ENCODE measurements at regions of chr1 and their contacts with region 1.

Region 1: GRCh38 chr1:32773018-32773763 is 44.0 kb downstream of the YARS1 start:
- DNase-seq: peak; percentile 81 to 90 (median 86)
- ATAC-seq: peak; percentile 86
- H3K4me3 ChIP-seq: no peak overlapping the region
- H3K27ac ChIP-seq: no peak overlapping the region
- H3K4me1 ChIP-seq: peaks cover 6 to 36% of the 10 kb centered on the region in 2 experiments; a peak in 3 of 5 replicates
- H3K27me3 ChIP-seq: no peaks in the 10 kb centered on the region
- CTCF ChIP-seq: peak; percentile 98 to 99 (median 98)
- EP300 ChIP-seq: peak; percentile 43; the same call in 1 of the 2 replicates
- POLR2A ChIP-seq: no peak
- RAD21 ChIP-seq: peak; percentile 96 to 99

Region 2: DNA sequence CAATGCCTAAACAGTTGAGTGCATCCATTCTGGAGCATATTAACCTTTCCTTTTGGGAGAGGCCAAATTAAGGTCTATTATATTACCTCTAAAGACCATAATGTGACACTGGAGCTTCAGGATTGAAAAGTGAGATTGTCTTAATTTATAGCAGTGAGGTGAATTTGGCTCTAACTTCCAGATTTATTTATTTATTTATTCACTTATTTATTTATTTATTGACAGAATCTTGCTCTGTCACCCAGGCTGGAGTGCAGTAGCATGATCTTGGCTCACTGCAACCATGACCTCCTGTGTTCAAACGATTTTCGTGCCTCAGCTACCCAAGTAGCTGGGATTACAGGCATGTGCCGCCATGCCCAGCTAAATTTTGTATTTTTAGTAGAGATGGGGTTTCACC is 1457.3 kb before region 1 on chr1:
- CTCF ChIA-PET with region 1: no interaction called
- POLR2A ChIA-PET with region 1: no interaction called
- in situ Hi-C with region 1: no loop called
- intact Hi-C with region 1: no loop called
- DNase-seq: no peak
- ATAC-seq: no peak
- H3K4me3 ChIP-seq: no peak overlapping the region
- H3K27ac ChIP-seq: no peak overlapping the region
- H3K4me1 ChIP-seq: no peaks in the 10 kb centered on the region
- H3K27me3 ChIP-seq: no peaks in the 10 kb centered on the region
- CTCF ChIP-seq: no peak
- EP300 ChIP-seq: no peak
- POLR2A ChIP-seq: no peak
- RAD21 ChIP-seq: no peak

Region 3: GRCh38 chr1:32521165-32521564 is 252.0 kb before region 1 on chr1:
- CTCF ChIA-PET with region 1: interaction called, 6 read pairs
- POLR2A ChIA-PET with region 1: interaction called, 16 read pairs
- in situ Hi-C with region 1: no loop called
- intact Hi-C with region 1: loop called (anchors 5 kb)
- DNase-seq: peak in 1 of 4 experiments; percentile 30
- ATAC-seq: peak; percentile 62
- H3K4me3 ChIP-seq: no peak overlapping the region
- H3K27ac ChIP-seq: no peak overlapping the region
- H3K4me1 ChIP-seq: no peaks in the 10 kb centered on the region
- H3K27me3 ChIP-seq: peaks cover 4 to 10% of the 10 kb centered on the region in 2 experiments; a peak in 4 of 5 replicates
- CTCF ChIP-seq: peak in 2 of 3 experiments; percentile 27 to 40; a peak in 3 of 6 replicates
- EP300 ChIP-seq: no peak
- POLR2A ChIP-seq: no peak
- RAD21 ChIP-seq: peak; percentile 33 to 53; a peak in 3 of 4 replicates

Region 4: GRCh38 chr1:32702599-32703478 is 70.4 kb before region 1 on chr1 and contains the start of gene SYNC:
- CTCF ChIA-PET with region 1: interaction called, 3 read pairs
- POLR2A ChIA-PET with region 1: interaction called, 11 read pairs
- in situ Hi-C with region 1: no loop called
- intact Hi-C with region 1: no loop called
- DNase-seq: peak; percentile 92 to 99 (median 96)
- ATAC-seq: peak; percentile 97
- H3K4me3 ChIP-seq: peak within 1 kb of the TSS; percentile 59
- H3K27ac ChIP-seq: peak within 1 kb of the TSS; percentile 49; the same call in 2 of the 3 replicates
- H3K4me1 ChIP-seq: peaks cover 9 to 30% of the 10 kb centered on the region in 2 experiments; a peak in 4 of 5 replicates
- H3K27me3 ChIP-seq: no peaks in the 10 kb centered on the region
- CTCF ChIP-seq: no peak; a peak in 1 of 6 replicates
- EP300 ChIP-seq: no peak; the same call in 1 of the 2 replicates
- POLR2A ChIP-seq: peak; percentile 61
- RAD21 ChIP-seq: no peak
- polyA plus RNA-seq, gene SYNC: 0.49 to 0.74 TPM

Region 5: GRCh38 chr1:32749771-32750170 is 23.4 kb before region 1 on chr1:
- CTCF ChIA-PET with region 1: no interaction called
- POLR2A ChIA-PET with region 1: interaction called, 5 read pairs
- in situ Hi-C with region 1: no loop called
- intact Hi-C with region 1: loop called (anchors 2 kb)
- DNase-seq: no peak
- ATAC-seq: no peak
- H3K4me3 ChIP-seq: no peak overlapping the region
- H3K27ac ChIP-seq: no peak overlapping the region; the same call in 2 of the 3 replicates
- H3K4me1 ChIP-seq: peaks cover 17 to 20% of the 10 kb centered on the region in 2 experiments; a peak in 4 of 5 replicates
- H3K27me3 ChIP-seq: no peaks in the 10 kb centered on the region
- CTCF ChIP-seq: peak in 2 of 3 experiments; percentile 32 to 35; a peak in 2 of 6 replicates
- EP300 ChIP-seq: no peak
- POLR2A ChIP-seq: no peak
- RAD21 ChIP-seq: peak in 1 of 2 experiments; percentile 14; a peak in 2 of 4 replicates

Region 6: DNA sequence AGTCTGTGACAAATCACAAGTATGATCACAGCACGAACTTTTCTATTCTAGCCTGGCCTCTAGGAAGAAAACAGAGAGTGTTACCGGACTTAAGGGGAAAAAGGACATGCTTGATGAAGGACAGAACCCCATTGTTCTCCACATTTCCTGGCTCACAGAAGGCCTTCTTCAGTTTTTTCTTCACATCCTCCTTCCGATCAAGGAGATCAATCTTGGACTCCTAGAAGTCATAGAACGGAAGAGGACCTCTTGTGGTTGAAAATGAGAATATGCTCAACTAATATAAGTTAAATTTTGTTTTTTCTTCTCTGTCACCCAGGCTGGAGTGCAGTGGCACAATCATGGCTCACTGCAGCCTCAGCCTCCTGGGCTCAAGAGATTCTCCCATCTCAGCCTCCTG is 13.7 kb after region 1 on chr1:
- CTCF ChIA-PET with region 1: no interaction called
- POLR2A ChIA-PET with region 1: interaction called, 42 read pairs
- in situ Hi-C with region 1: no loop called
- intact Hi-C with region 1: no loop called
- DNase-seq: no peak
- ATAC-seq: peak; percentile 62
- H3K4me3 ChIP-seq: no peak overlapping the region
- H3K27ac ChIP-seq: no peak overlapping the region
- H3K4me1 ChIP-seq: no peaks in the 10 kb centered on the region
- H3K27me3 ChIP-seq: no peaks in the 10 kb centered on the region
- CTCF ChIP-seq: peak in 2 of 3 experiments; percentile 26 to 43; a peak in 3 of 6 replicates
- EP300 ChIP-seq: no peak
- POLR2A ChIP-seq: no peak
- RAD21 ChIP-seq: 0 out of 4 replicates have a peak, but pooled peaks of 1 of the 2 experiments have one; percentile 11

Measured in K562 (cell line).